HCT116 (cell line): ENCODE measurements at regions of chr9 and their contacts with region 1.

Region 1: DNA sequence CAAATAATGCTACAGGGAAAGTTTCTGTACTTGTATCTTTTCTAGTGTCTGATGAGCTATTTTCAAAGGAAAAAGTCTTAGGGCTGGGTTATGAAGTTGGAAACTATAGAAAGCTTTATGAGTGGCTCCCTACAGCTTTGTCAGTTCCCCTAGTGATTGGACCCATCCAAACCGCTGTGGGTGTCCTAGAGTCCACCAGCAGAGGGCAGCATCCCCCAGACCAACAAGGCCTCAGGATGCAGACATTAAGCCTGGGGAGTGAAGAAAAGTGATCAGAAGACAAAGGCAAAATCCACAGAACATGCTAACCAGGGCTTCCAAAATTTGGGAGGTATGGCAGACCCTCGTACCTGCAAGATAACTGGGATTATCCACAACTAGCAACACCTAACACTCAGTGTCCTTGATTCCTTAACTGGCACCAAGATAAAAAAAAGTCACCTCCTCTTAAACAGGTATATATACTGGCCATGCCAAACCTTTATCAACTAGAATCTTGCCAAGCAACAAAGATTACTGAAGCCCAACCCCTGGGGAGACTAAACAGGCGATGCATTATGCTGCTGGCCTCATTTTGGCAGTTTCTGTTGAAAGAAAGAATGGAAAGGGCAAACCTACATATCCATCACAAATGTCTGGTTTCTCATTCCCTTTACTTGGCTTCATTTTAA is 110.4 kb upstream of the NR5A1 start:
- DNase-seq: peak; percentile 68
- ATAC-seq: peak; percentile 88
- H3K4me3 ChIP-seq: no peak overlapping the region
- H3K27ac ChIP-seq: no peak overlapping the region
- H3K4me1 ChIP-seq: peaks cover 36 to 59% of the 10 kb centered on the region in 2 experiments
- H3K27me3 ChIP-seq: no peaks in the 10 kb centered on the region
- CTCF ChIP-seq: peak; percentile 96
- POLR2A ChIP-seq: no peak
- RAD21 ChIP-seq: peak; percentile 97

Region 2: GRCh38 chr9:124574534-124575341 is 42.9 kb before region 1 on chr9:
- CTCF ChIA-PET with region 1: interaction called, 26 read pairs
- POLR2A ChIA-PET with region 1: no interaction called
- RAD21 ChIA-PET with region 1: no interaction called
- intact Hi-C with region 1: no loop called
- DNase-seq: peak; percentile 98
- ATAC-seq: peak; percentile 87
- H3K4me3 ChIP-seq: peak overlapping the region in 1 of 2 experiments; percentile 21; a peak in 2 of 4 replicates
- H3K27ac ChIP-seq: peak overlapping the region; percentile 73
- H3K4me1 ChIP-seq: peaks cover 43 to 81% of the 10 kb centered on the region in 2 experiments
- H3K27me3 ChIP-seq: no peaks in the 10 kb centered on the region
- CTCF ChIP-seq: no peak
- POLR2A ChIP-seq: no peak
- RAD21 ChIP-seq: peak; percentile 39

Region 3: GRCh38 chr9:124629600-124629999 is 12.0 kb after region 1 on chr9:
- CTCF ChIA-PET with region 1: interaction called, 25 read pairs
- POLR2A ChIA-PET with region 1: no interaction called
- RAD21 ChIA-PET with region 1: no interaction called
- intact Hi-C with region 1: no loop called
- DNase-seq: no peak
- ATAC-seq: no peak
- H3K4me3 ChIP-seq: no peak overlapping the region
- H3K27ac ChIP-seq: no peak overlapping the region
- H3K4me1 ChIP-seq: peaks cover 23 to 46% of the 10 kb centered on the region in 2 experiments
- H3K27me3 ChIP-seq: no peaks in the 10 kb centered on the region
- CTCF ChIP-seq: no peak
- POLR2A ChIP-seq: no peak
- RAD21 ChIP-seq: no peak

Region 4: DNA sequence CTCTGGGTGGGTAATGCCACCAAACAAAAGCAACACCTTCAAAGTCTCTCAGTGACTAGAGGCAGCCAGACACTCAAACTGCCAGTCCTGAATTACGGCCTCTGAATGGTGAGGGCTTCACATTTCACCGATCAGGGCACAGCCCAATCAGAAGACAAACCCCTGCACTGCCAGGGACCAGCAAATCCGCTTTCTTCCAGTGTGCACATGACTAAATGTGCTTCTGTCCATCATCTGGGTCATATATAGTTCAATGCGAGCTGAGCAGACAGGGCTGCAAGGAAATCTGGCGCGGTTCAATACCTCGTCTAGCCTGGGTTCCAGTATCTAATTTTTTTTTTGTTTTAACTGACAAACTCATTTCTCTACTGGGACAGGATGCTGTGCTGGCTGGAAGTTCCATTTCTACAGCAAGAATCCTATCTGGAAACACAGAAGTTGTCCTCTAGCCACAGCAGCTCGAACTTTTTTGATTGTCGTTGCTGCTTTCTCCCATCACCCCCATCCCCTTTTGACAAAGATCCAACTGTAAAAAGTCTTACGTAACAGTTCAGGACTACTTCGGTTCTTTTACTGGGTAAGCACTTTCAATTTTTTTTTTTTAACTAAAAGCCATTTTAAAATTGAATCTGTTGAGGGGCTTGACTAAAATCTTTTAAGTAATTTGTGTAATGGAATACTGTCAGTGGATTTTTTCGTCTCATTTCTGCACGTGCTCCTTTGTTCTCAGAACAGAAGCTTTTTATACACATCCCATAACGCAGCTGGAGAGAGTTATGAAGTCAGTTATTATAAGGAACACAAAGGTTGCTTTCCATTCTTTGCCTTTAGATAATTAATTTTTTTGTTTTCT is 40.8 kb after region 1 on chr9:
- CTCF ChIA-PET with region 1: interaction called, 11 read pairs
- POLR2A ChIA-PET with region 1: interaction called, 3 read pairs
- RAD21 ChIA-PET with region 1: no interaction called
- intact Hi-C with region 1: no loop called
- DNase-seq: peak; percentile 93
- ATAC-seq: peak; percentile 97
- H3K4me3 ChIP-seq: peak overlapping the region; percentile 53 to 62
- H3K27ac ChIP-seq: peak overlapping the region; percentile 69
- H3K4me1 ChIP-seq: peaks cover 16 to 37% of the 10 kb centered on the region in 2 experiments; a peak in 3 of 4 replicates
- H3K27me3 ChIP-seq: no peaks in the 10 kb centered on the region
- CTCF ChIP-seq: no peak
- POLR2A ChIP-seq: peak; percentile 90
- RAD21 ChIP-seq: no peak

Region 5: DNA sequence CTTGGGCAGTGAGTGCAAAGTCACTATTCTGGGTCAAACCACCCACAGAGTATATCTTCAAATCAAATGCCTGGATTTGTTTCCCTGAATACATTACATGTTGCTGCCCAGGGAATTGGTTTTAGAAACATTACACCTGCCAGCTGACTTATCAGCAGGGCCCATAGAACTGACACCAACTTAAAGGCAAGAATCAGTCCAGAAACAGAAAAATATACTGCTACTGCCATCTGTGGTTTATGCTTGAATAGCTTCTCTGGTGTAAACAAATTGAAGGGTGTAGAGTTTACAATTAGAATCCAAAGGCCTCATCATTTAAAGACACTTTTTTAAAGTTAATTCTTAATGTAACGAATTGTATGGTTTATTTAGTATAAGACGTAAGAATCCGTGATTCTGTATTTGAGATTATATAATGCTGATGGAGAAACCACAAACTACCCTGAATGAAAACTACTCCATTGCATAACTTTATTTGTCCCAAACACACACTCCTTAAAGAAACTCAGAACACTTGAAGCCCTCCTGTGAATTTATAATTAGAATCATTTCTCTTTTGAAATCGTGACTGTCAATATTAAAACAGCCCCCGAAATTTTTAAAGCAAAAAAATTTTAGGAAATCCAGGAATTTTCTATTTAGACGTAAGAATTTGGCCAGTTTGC is 147.3 kb after region 1 on chr9:
- CTCF ChIA-PET with region 1: interaction called, 30 read pairs
- POLR2A ChIA-PET with region 1: interaction called, 3 read pairs
- RAD21 ChIA-PET with region 1: interaction called in 1 of 2 experiments, 6 read pairs
- intact Hi-C with region 1: loop called (anchors 2 kb)
- DNase-seq: no peak
- ATAC-seq: peak; percentile 41; the same call in 1 of the 2 replicates
- H3K4me3 ChIP-seq: no peak overlapping the region
- H3K27ac ChIP-seq: no peak overlapping the region
- H3K4me1 ChIP-seq: peaks cover 25 to 27% of the 10 kb centered on the region in 2 experiments
- H3K27me3 ChIP-seq: no peaks in the 10 kb centered on the region
- CTCF ChIP-seq: peak in 2 of 3 experiments; percentile 23 to 46; a peak in 3 of 6 replicates
- POLR2A ChIP-seq: no peak
- RAD21 ChIP-seq: no peak

Region 6: GRCh38 chr9:124868511-124869465 is 251.2 kb after region 1 on chr9:
- CTCF ChIA-PET with region 1: no interaction called
- POLR2A ChIA-PET with region 1: no interaction called
- RAD21 ChIA-PET with region 1: no interaction called
- intact Hi-C with region 1: no loop called
- DNase-seq: peak; percentile 40
- ATAC-seq: peak; percentile 86
- H3K4me3 ChIP-seq: peak overlapping the region; percentile 91 to 94
- H3K27ac ChIP-seq: peak overlapping the region; percentile 96
- H3K4me1 ChIP-seq: peaks cover 20 to 52% of the 10 kb centered on the region in 2 experiments
- H3K27me3 ChIP-seq: no peaks in the 10 kb centered on the region
- CTCF ChIP-seq: peak in 2 of 3 experiments; percentile 27 to 57; a peak in 4 of 6 replicates
- POLR2A ChIP-seq: no peak
- RAD21 ChIP-seq: no peak